ENCODE measurements at regions of chr4 and their contacts with region 1.

Region 1: DNA sequence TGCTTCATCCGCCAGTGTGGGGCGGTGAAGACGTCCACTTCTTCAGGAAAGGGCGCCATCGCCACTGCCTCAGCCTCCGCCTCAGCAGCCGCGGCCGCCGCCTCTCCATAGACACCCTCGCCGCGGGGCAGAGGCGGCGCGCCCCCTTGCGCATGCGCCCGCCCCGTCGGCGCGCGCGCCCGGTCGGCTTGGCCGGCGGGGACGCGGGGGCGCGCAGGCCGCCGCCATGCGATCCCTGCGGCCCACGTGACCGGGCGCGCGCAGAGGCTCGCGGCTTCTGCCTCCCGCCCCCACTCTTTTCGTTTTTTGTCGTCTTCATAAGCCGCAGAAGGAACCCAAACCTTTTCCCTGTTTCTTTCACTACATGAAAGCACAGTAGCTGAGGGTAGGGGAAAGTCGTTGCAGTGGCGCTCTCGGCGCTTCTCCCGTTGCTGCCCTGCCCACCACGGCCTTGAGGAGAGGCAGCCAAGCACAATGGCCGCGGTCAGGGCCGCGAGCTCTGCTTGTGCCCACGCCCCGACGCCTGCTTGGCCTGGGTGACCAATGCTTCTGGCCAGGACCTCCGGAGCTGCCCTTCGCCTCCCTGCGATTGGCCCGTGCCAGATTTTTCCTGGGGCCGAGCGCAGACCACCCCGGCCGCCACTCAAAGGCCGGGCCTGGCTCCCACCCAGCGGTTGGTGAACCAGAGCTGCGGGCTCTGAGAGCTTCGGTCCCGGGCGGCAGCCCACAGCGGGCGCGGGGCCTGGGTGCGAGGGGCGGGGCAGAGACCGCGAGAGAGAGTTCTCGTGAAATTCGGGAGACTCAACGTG is at the start of gene FBXL5:
- DNase-seq: peak; percentile 96
- H3K4me3 Mint-ChIP-seq: peak within 1 kb of the TSS; percentile 99
- H3K27ac Mint-ChIP-seq: peak within 1 kb of the TSS; percentile 96
- H3K4me1 Mint-ChIP-seq: peaks cover 55% of the 10 kb centered on the region
- H3K27me3 Mint-ChIP-seq: peaks cover 1% of the 10 kb centered on the region
- total RNA-seq, gene FBXL5: 28.9 and 31.2 TPM in 2 replicates

Region 2: GRCh38 chr4:14787894-14788293 is 867.5 kb before region 1 on chr4:
- intact Hi-C with region 1: loop called (anchors 10 kb)
- DNase-seq: peak; percentile 57
- H3K4me3 Mint-ChIP-seq: no peak overlapping the region
- H3K27ac Mint-ChIP-seq: no peak overlapping the region
- H3K4me1 Mint-ChIP-seq: peaks cover 30% of the 10 kb centered on the region
- H3K27me3 Mint-ChIP-seq: no peaks in the 10 kb centered on the region

Region 3: GRCh38 chr4:14841801-14842768 is 813.3 kb before region 1 on chr4:
- intact Hi-C with region 1: loop called (anchors 5 kb)
- DNase-seq: no peak
- H3K4me3 Mint-ChIP-seq: no peak overlapping the region
- H3K27ac Mint-ChIP-seq: no peak overlapping the region
- H3K4me1 Mint-ChIP-seq: no peaks in the 10 kb centered on the region
- H3K27me3 Mint-ChIP-seq: no peaks in the 10 kb centered on the region

Region 4: GRCh38 chr4:15681207-15682015 is 26.0 kb after region 1 on chr4 and contains the start of gene FAM200B:
- intact Hi-C with region 1: loop called (anchors 1 kb)
- DNase-seq: peak; percentile 100
- H3K4me3 Mint-ChIP-seq: peak within 1 kb of the TSS; percentile 100
- H3K27ac Mint-ChIP-seq: peak within 1 kb of the TSS; percentile 99
- H3K4me1 Mint-ChIP-seq: peaks cover 40% of the 10 kb centered on the region
- H3K27me3 Mint-ChIP-seq: no peaks in the 10 kb centered on the region
- total RNA-seq, gene FAM200B: 6.0 and 9.9 TPM in 2 replicates

Region 5: DNA sequence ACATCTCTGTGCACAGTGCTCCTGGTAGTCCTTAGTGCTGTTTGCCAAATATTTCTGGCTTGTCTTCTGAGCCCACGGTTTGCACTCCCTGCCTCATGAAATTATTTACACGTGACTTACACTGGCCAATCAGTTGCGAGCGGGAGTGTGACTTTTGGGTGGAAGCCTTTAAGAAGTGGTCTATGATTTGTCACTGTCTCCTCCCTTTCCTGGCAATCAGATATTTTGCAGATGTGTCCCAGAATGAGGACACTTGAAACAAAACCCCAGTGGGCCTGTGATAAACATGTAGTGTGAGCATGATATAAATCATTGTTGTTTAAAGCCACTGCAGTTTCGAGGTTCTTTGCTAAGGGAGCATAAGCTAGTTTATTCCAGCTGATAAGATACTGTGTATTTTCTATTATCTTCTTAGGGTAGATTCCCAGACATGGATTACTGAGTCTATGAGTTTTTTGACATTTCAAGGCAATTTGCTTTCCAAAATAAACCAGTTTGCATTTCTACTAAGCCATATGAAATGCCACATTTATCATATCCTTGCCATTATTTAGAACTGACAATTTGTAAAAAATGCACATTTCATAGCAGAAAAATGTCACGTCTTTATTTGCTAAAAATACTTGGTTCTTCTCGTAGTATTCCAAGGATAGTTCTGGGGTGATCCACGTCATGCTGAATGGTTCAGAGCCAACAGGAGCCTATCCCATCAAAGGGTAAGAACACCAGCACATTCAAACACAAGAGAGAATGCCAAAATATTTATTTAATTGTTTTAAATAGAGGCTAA is 59.4 kb after region 1 on chr4:
- intact Hi-C with region 1: no loop called
- DNase-seq: no peak
- H3K4me3 Mint-ChIP-seq: no peak overlapping the region
- H3K27ac Mint-ChIP-seq: no peak overlapping the region
- H3K4me1 Mint-ChIP-seq: no peaks in the 10 kb centered on the region
- H3K27me3 Mint-ChIP-seq: peaks cover 2% of the 10 kb centered on the region

Region 6: GRCh38 chr4:15756361-15756861 is 101.0 kb after region 1 on chr4:
- intact Hi-C with region 1: loop called (anchors 1 kb)
- DNase-seq: peak; percentile 92
- H3K4me3 Mint-ChIP-seq: peak overlapping the region; percentile 77
- H3K27ac Mint-ChIP-seq: peak overlapping the region; percentile 94
- H3K4me1 Mint-ChIP-seq: peaks cover 51% of the 10 kb centered on the region
- H3K27me3 Mint-ChIP-seq: no peaks in the 10 kb centered on the region

Region 7: GRCh38 chr4:15794905-15795304 is 139.5 kb after region 1 on chr4:
- intact Hi-C with region 1: loop called (anchors 5 kb)
- DNase-seq: no peak
- H3K4me3 Mint-ChIP-seq: peak overlapping the region; percentile 49
- H3K27ac Mint-ChIP-seq: peak overlapping the region; percentile 79
- H3K4me1 Mint-ChIP-seq: peaks cover 50% of the 10 kb centered on the region
- H3K27me3 Mint-ChIP-seq: peaks cover 1% of the 10 kb centered on the region

Region 8: DNA sequence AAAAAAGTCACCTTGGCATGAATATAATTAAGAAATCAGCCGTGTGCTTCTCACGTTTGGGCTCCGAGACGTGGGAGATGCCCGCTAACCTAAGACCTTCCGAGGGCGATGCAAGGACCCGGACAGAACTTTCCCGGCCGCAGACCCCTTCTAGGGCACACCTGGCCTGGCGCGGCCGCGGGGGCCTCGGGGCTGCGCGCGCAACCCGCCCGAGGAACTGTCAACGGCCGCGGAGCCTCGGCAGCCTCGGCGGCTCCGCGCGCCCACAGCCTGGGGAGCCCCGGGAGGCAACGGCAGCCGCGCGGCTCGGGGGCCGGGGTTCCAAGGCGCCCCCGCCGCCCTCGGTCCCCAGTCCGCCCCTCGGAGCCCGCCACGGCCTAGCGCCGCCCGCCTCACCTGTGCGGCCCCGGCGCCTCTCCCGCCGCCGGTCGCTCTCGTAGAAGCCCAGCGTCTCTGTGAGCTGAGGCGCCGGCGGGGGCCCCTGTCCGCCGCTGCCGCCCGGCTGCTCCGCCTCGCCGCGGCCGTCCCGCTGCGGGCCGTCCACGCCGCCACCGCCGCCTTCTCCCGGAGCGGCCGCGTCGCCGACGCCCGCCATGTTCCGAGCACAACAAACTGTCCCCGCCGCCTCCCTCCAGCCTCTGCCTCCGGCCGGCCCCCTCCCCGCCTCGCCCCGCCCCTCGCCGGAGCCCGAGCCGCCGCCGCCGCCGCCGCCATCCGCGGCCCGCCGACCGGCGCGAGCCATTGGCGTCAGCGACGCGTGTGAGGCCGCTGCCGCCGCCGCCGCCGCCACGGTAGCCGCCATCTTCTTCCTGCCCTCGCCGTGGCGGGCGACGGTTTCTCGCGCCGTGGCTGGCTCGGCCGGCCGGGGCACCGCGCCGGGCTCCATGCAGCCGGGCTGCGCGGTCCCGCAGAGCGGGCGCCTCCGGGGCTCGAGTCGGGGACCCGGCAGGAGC is 570.7 kb after region 1 on chr4 and contains the start of gene TAPT1:
- intact Hi-C with region 1: loop called (anchors 10 kb)
- DNase-seq: peak; percentile 94
- H3K4me3 Mint-ChIP-seq: peak within 1 kb of the TSS; percentile 90
- H3K27ac Mint-ChIP-seq: peak within 1 kb of the TSS; percentile 98
- H3K4me1 Mint-ChIP-seq: peaks cover 45% of the 10 kb centered on the region
- H3K27me3 Mint-ChIP-seq: no peaks in the 10 kb centered on the region
- total RNA-seq, gene TAPT1: 27.2 and 29.3 TPM in 2 replicates

Measured in activated CD4-positive, alpha-beta T cell treated with anti-CD3 and anti-CD28 coated beads, Interleukin-2, amount 10 ng/mL, durations not matched to agents 24 days and 14 days (primary cell).